Mammary epithelial cell (primary cell): ENCODE measurements at regions of chr7 and their contacts with region 1.

Region 1: DNA sequence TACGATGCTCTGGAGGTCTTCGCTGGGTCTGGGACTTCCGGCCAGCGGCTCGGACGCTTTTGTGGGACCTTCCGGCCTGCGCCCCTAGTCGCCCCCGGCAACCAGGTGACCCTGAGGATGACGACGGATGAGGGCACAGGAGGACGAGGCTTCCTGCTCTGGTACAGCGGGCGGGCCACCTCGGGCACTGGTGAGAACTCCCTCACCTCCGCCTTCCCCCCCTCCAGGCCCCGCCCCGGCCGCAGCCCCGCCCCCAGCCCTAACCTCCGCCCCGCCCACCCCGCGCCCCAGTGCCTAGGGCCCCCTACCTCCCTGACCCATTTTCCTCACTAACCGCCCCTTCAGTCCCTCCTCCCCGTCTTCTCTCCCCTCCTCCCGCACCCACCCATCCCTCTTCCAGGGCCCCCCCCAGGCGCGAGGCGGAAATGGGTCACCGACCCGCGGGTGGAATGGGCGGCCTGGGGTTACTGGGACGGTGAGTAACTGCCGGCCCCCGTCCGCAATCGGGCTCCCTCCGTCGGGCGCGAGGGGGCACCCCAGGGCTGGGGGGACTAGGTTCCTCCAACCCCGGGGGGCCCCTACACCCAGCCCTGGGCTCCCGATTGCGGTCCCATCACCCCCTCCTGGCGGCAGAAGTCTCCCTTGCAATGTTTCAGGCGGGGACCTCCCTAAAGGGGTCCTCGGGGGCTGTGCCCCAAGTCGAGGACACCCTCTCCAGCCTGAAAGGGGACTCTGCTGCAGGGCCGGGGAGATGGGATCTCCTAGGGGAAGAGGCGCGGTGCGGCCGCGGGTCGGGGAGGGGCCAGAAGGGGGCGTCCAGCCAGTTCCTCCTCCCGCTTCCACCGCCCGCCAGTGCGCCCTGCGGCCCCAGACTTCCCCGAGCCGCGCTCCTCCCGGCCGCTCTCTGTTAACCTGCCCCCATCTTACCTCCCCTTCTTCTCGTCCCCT is 2.1 kb downstream of the PCOLCE start:
- DNase-seq: peak; percentile 42
- H3K4me3 ChIP-seq: peak overlapping the region; percentile 53 to 74 (median 64)
- H3K27ac ChIP-seq: no peak overlapping the region
- H3K4me1 ChIP-seq: peaks cover 18% of the 10 kb centered on the region
- H3K27me3 ChIP-seq: no peaks in the 10 kb centered on the region
- CTCF ChIP-seq: peak in 1 of 2 donors; percentile 43

Region 2: DNA sequence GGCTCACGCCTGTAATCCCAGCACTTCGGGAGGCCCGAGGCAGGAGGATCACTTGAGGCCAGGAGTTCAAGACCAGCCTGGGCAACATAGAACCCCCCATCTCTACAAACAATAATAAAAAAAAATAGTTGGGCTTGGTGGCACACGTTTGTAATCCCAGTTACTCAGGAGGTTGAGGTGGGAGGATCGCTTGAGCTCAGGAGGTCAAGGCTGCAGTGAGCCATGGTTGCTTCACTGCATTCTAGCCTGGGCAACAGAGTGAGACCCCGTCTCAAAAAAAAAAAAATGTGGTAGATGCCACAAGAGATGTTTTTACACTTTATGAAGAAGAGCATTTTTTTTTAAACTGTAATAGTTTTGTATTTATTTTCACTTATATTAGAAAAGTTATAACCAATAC is 107.8 kb before region 1 on chr7:
- CTCF ChIA-PET with region 1: no interaction called
- dilution Hi-C with region 1: loop called (anchors 5 kb)
- in situ Hi-C with region 1: no loop called
- intact Hi-C with region 1: no loop called
- DNase-seq: no peak
- H3K4me3 ChIP-seq: no peak overlapping the region
- H3K27ac ChIP-seq: no peak overlapping the region
- H3K4me1 ChIP-seq: no peaks in the 10 kb centered on the region
- H3K27me3 ChIP-seq: no peaks in the 10 kb centered on the region
- CTCF ChIP-seq: no peak

Region 3: DNA sequence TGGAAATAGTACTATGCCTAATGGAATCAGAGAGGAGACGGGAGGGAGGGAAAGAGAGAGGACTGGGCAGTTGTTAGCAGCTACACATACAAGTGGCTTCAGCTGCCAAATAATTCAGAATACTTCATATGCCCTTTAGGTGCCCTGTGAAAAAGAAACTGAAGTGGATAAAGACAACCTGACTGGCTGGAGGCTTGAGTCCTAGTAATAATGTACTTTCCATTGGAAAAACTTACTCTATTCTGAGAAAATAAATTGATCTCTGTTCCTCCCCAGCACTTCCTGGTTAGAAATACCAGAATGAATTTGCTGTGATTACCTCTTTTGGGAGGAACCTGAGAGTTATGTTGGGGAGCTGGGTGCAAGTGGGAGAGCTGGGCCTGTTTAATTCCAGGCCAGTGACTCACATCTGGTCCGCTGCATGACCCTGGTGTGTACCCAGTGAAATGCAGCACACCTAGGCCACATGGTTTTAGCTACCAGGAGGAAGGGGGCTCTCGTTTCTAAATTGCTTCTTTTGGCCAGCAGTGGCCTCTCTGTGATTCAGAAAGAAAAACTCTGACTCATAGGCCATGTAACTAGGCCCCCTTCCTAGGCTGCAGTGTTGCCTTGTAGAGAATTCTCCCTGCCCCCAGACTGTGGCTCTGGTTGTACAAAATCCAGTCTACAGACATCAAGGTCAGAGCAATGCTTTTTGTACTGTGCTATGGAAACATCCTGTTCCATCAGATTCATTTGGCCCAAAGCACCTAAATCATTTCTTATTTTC is 58.8 kb before region 1 on chr7:
- CTCF ChIA-PET with region 1: no interaction called
- dilution Hi-C with region 1: loop called (anchors 5 kb)
- in situ Hi-C with region 1: no loop called
- intact Hi-C with region 1: no loop called
- DNase-seq: peak; percentile 85
- H3K4me3 ChIP-seq: no peak overlapping the region
- H3K27ac ChIP-seq: peak overlapping the region; percentile 62
- H3K4me1 ChIP-seq: peaks cover 27% of the 10 kb centered on the region
- H3K27me3 ChIP-seq: no peaks in the 10 kb centered on the region
- CTCF ChIP-seq: no peak

Region 4: DNA sequence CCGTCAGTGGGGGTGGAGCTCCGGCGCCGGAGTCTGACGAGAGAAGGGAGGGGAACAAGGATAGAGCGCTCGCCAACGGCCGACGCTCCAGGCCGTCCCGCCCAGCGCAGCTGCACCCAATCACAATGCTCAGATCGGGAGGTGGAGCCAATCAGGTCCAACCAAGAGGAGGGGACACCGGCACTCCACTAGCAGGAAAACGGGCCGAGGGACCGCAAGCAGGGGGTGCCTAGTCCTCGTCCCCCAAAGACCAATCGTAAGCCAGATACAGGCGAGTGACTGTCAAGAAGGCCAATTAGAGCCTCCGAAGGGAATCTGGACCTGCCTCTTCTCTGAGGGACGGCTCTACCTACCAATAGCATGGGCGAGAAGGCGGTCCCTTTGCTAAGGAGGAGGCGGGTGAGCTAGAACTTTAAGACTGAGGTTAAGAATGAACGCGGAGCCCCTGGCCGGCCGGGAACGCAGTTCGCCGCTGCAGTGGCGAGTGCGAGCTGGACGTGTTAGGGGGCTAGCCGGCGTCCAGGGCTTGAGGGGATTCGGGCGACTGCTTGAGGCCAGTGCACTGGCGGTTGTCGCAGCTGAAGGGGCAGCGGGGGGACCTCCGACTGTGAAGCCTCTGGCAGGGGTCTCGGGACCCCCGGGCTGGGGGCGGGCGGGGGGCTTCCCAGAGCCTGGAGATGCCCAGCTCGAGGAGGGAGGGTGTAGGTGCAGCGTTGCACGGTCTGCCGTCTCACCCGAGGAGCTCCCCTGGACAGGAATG is 17.9 kb before region 1 on chr7 and contains the start of gene FBXO24:
- CTCF ChIA-PET with region 1: no interaction called
- dilution Hi-C with region 1: no loop called
- in situ Hi-C with region 1: no loop called
- intact Hi-C with region 1: loop called (anchors 2 kb)
- DNase-seq: peak; percentile 100
- H3K4me3 ChIP-seq: peak within 1 kb of the TSS; percentile 80 to 98 (median 88)
- H3K27ac ChIP-seq: peak within 1 kb of the TSS; percentile 74
- H3K4me1 ChIP-seq: peaks cover 20% of the 10 kb centered on the region
- H3K27me3 ChIP-seq: no peaks in the 10 kb centered on the region
- CTCF ChIP-seq: no peak
- total RNA-seq, gene FBXO24: 0.17 to 0.45 TPM

Region 5: DNA sequence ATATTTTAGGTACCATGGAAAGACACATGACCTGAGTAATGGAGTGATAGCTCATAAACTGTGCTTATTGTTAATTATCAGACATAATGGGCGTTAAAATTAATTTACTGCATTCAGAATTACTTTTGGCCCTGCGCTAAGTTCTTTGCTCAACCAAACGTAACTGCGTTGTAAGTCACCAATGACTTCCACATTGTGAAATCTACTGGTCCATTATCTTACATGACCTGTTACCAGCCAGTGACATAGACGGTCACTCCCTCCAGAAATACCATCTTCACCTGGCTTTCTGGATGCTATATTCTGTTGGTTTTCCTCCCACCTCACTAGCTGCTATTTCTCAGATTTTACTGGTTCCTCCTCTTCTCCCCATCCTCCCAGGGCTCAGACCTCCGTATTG is 94.7 kb after region 1 on chr7:
- CTCF ChIA-PET with region 1: no interaction called
- dilution Hi-C with region 1: no loop called
- in situ Hi-C with region 1: no loop called
- intact Hi-C with region 1: no loop called
- DNase-seq: no peak
- H3K4me3 ChIP-seq: no peak overlapping the region
- H3K27ac ChIP-seq: no peak overlapping the region
- H3K4me1 ChIP-seq: no peaks in the 10 kb centered on the region
- H3K27me3 ChIP-seq: no peaks in the 10 kb centered on the region
- CTCF ChIP-seq: no peak